ENCODE measurements at regions of chr1 and their contacts with region 1.

Region 1: DNA sequence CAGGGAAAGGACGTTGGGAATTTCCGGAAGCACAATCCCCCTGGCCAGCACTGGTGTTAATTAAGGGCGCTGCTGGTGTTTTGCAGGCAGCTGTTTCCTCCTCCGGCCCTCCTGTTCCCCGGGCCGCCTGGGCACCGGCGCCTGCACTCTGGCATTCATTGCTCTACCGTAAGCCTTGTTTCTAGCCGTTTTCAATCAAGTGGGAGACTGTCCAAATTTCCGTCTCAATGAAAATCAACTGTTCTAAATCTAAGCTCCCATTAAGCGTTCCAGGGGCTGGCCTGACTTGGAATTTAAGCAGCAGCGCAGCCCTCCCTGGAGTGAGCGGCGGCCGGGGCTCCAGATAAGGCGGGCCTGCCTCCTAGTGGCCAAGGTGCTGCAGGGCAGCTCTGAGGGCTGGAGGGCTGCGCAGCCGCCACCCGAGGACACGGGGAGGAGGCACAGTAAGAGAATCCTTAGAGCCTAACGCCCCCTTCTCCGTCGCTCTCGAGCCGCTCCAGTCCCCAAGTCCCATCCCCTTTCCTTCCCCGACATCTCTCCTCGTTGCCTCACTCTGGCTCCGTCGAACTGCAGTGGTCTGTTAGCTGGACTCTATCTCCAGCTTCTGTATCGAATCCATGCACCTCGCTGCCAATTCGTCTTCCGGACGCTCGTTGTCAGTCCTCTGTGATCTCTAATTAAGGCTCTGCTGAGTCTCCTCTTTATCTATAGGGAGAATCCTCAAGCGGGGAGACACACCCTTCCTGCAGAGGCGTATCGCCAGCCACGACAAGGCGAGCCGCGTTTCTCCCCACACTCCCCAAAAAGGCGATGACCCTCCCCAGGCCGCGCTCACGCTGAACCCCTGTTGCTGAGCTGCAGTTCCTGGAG is 57.8 kb upstream of the LRRC8D start:
- DNase-seq: peak; percentile 80 to 92 (median 85)
- ATAC-seq: peak; percentile 99
- H3K4me3 ChIP-seq: peak overlapping the region; percentile 61
- H3K4me3 Mint-ChIP-seq: peak overlapping the region; percentile 86
- H3K27ac ChIP-seq: peak overlapping the region in 1 of 2 donors; percentile 42
- H3K27ac Mint-ChIP-seq: peak overlapping the region; percentile 78
- H3K4me1 ChIP-seq: peaks cover 44% of the 10 kb centered on the region
- H3K4me1 Mint-ChIP-seq: peaks cover 51% of the 10 kb centered on the region
- H3K27me3 ChIP-seq: no peaks in the 10 kb centered on the region
- H3K27me3 Mint-ChIP-seq: no peaks in the 10 kb centered on the region
- CTCF ChIP-seq: peak; percentile 94

Region 2: DNA sequence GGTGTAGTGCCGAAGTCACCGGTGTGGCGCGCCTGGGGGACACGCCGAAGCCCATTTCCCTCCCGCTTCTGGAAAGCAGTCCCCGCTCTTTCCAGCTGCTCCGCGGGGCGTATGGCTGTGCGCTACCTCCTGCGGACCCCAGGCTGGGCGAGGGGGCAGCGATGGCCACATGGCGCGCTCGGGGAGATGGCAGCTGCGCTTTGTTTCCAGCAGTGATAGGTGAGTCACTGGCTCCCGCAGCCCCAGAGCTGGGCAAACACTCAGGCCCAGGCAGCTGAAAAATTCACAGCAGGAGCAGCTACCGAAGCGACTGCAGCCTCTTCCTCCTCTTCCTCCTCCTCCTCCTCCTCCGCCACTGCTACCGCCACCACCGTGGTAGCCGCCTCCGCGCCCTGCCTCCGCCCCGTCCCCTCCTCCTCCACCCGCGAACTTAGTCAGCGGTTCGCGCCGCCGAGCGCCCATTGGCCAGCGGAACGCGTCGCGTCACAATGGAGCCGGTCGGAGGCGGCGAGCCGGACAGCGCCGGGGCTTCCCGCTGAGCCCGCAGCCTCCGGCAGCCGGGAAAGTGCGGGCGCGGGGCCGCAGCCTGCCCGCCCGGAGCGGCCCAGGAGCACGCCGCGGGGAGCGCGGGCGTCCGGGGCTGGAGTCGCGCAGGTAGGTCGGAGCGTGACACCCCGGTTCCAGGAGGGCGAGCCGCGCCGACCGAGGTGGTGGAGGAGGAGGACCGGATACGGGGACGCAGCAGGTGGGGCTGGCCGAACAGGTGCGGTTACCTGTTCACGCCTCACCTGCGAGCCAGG is 238.4 kb before region 1 on chr1 and contains the start of gene LRRC8B:
- CTCF ChIA-PET with region 1: interaction called, 12 read pairs
- POLR2A ChIA-PET with region 1: interaction called, 5 read pairs
- intact Hi-C with region 1: loop called (anchors 1 to 5 kb)
- DNase-seq: peak; percentile 74 to 95 (median 86)
- ATAC-seq: peak; percentile 79
- H3K4me3 ChIP-seq: peak within 1 kb of the TSS; percentile 97
- H3K4me3 Mint-ChIP-seq: no peak within 1 kb of the TSS
- H3K27ac ChIP-seq: peak within 1 kb of the TSS; percentile 90 to 91
- H3K27ac Mint-ChIP-seq: no peak within 1 kb of the TSS
- H3K4me1 ChIP-seq: peaks cover 23% of the 10 kb centered on the region
- H3K4me1 Mint-ChIP-seq: peaks cover 18% of the 10 kb centered on the region
- H3K27me3 ChIP-seq: no peaks in the 10 kb centered on the region
- H3K27me3 Mint-ChIP-seq: no peaks in the 10 kb centered on the region
- CTCF ChIP-seq: no peak
- total RNA-seq, gene LRRC8B: 15.4 to 16.8 TPM

Region 3: DNA sequence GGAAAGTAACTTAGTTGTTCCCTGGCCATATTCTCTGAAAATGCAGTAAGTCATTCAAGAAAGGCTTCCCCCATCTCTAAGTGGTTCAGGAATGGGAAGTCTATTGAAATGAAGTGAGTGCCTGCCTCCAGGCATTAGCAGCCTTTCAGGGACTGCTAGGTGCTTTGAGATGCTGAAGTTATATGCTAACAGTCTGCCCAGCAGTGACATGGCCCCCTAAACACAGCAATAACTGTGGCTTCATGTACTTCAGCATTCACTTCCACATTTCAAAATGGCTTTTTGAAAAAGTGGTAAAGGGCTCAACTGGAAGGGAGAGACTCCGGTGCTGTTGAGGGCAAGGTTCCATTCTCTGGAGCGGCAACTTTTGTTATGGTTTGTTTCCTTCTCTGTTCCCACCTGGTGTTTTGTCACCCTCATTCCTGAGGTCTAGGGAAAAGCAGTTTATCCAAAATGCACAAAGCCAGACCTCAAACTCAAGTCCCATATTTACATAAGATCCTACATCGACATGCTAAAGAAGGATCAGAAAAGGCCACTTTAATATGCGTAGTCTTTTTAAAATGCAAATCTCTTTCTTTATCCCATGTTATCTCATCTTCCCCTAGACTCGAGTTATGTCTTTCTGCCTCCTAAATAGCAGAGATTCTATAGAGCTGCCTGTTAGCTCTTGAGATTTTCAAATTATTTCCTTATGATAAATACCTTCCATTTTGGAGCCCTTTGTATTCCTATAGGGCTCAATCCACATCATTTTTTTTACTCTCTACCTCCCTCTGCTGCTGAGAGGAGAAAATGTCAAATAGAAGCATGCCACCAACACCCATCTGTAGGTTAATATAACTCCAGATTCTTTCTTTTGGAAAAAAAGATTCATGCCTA is 164.3 kb before region 1 on chr1:
- CTCF ChIA-PET with region 1: interaction called, 35 read pairs
- POLR2A ChIA-PET with region 1: interaction called, 15 read pairs
- intact Hi-C with region 1: no loop called
- DNase-seq: peak in 3 of 14 experiments; percentile 51 to 68 (median 67)
- ATAC-seq: peak; percentile 70
- H3K4me3 ChIP-seq: no peak overlapping the region
- H3K4me3 Mint-ChIP-seq: peak overlapping the region; percentile 7
- H3K27ac ChIP-seq: no peak overlapping the region
- H3K27ac Mint-ChIP-seq: peak overlapping the region; percentile 21
- H3K4me1 ChIP-seq: peaks cover 27% of the 10 kb centered on the region
- H3K4me1 Mint-ChIP-seq: peaks cover 90% of the 10 kb centered on the region
- H3K27me3 ChIP-seq: no peaks in the 10 kb centered on the region
- H3K27me3 Mint-ChIP-seq: no peaks in the 10 kb centered on the region
- CTCF ChIP-seq: peak; percentile 75

Region 4: GRCh38 chr1:89615676-89616598 is 147.1 kb before region 1 on chr1:
- CTCF ChIA-PET with region 1: interaction called, 23 read pairs
- POLR2A ChIA-PET with region 1: interaction called, 88 read pairs
- intact Hi-C with region 1: no loop called
- DNase-seq: peak in 3 of 14 experiments; percentile 48 to 66 (median 56)
- ATAC-seq: no peak
- H3K4me3 ChIP-seq: no peak overlapping the region
- H3K4me3 Mint-ChIP-seq: no peak overlapping the region
- H3K27ac ChIP-seq: no peak overlapping the region
- H3K27ac Mint-ChIP-seq: peak overlapping the region; percentile 99
- H3K4me1 ChIP-seq: peaks cover 42% of the 10 kb centered on the region
- H3K4me1 Mint-ChIP-seq: peaks cover 90% of the 10 kb centered on the region
- H3K27me3 ChIP-seq: no peaks in the 10 kb centered on the region
- H3K27me3 Mint-ChIP-seq: no peaks in the 10 kb centered on the region
- CTCF ChIP-seq: peak; percentile 17

Region 5: DNA sequence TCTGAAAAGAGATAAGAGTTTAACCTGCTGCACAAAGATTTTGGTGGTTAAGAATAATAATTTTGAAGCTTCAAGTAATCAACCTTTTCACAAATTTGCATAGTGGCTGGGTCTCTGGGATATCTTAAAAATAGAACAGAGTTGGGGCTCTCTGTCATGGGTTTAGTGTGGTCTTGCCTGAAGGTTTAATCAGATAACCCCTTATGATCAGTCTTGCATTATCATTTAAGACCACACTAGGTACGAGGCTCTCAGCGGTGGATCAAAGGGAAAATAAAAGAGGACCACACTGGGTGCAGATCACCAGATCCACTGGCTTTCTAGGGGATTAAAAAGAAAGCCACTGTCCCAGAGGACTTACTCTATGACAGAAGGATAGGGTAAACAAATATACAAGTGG is 110.6 kb before region 1 on chr1:
- CTCF ChIA-PET with region 1: interaction called, 17 read pairs
- POLR2A ChIA-PET with region 1: interaction called, 17 read pairs
- intact Hi-C with region 1: no loop called
- DNase-seq: no peak
- ATAC-seq: no peak
- H3K4me3 ChIP-seq: no peak overlapping the region
- H3K4me3 Mint-ChIP-seq: peak overlapping the region; percentile 14
- H3K27ac ChIP-seq: peak overlapping the region in 1 of 2 donors; percentile 7
- H3K27ac Mint-ChIP-seq: peak overlapping the region; percentile 88
- H3K4me1 ChIP-seq: peaks cover 25% of the 10 kb centered on the region
- H3K4me1 Mint-ChIP-seq: peaks cover 90% of the 10 kb centered on the region
- H3K27me3 ChIP-seq: no peaks in the 10 kb centered on the region
- H3K27me3 Mint-ChIP-seq: no peaks in the 10 kb centered on the region
- CTCF ChIP-seq: no peak

Region 6: DNA sequence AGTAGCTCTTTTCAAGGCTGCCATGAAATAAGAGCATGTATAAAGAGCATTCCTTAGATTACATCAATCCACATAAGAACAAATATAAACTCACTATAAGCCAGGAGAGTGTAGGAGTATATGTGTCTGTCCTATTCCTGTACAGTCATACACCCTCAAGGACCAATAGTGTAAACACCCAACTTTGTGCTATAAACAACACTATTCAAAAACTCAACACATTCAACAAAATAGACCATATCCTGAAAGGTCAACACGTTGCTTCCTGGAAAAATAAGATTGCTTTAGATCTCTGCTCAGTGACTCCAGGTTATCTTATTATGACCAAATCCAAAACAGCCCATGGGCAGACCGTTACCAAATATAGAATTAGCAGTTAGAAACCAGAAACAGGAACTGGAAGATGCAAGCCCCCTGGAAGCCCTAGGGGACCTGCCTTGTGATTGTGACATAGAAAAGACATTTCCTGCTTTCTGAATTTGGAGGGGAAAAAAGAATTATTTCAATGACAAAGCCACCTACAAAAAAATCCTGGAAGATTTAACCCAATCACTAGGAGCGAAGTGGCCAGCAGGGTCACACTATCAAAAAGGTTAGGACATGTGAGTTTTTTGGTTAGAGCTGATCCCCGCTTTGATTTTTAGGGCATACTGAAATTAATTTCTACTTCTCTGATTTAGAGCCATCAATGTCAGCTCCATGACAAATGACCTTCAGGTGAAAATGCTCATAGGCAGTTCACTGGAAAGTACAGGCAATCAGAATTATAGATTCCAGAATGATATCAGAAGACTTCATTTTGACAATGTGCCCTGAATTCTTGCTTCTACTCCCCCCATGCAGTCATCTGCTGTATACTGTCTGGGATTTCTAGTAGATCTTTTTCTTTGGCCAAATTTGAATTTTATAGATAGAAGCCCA is 70.2 kb before region 1 on chr1:
- CTCF ChIA-PET with region 1: interaction called, 27 read pairs
- POLR2A ChIA-PET with region 1: interaction called, 6 read pairs
- intact Hi-C with region 1: loop called in 1 of 2 experiments (anchors 5 kb)
- DNase-seq: peak in 1 of 14 experiments; percentile 17
- ATAC-seq: no peak
- H3K4me3 ChIP-seq: no peak overlapping the region
- H3K4me3 Mint-ChIP-seq: peak overlapping the region; percentile 22
- H3K27ac ChIP-seq: peak overlapping the region; percentile 7 to 31
- H3K27ac Mint-ChIP-seq: peak overlapping the region; percentile 79
- H3K4me1 ChIP-seq: peaks cover 30% of the 10 kb centered on the region
- H3K4me1 Mint-ChIP-seq: peaks cover 86% of the 10 kb centered on the region
- H3K27me3 ChIP-seq: no peaks in the 10 kb centered on the region
- H3K27me3 Mint-ChIP-seq: no peaks in the 10 kb centered on the region
- CTCF ChIP-seq: no peak

Region 7: DNA sequence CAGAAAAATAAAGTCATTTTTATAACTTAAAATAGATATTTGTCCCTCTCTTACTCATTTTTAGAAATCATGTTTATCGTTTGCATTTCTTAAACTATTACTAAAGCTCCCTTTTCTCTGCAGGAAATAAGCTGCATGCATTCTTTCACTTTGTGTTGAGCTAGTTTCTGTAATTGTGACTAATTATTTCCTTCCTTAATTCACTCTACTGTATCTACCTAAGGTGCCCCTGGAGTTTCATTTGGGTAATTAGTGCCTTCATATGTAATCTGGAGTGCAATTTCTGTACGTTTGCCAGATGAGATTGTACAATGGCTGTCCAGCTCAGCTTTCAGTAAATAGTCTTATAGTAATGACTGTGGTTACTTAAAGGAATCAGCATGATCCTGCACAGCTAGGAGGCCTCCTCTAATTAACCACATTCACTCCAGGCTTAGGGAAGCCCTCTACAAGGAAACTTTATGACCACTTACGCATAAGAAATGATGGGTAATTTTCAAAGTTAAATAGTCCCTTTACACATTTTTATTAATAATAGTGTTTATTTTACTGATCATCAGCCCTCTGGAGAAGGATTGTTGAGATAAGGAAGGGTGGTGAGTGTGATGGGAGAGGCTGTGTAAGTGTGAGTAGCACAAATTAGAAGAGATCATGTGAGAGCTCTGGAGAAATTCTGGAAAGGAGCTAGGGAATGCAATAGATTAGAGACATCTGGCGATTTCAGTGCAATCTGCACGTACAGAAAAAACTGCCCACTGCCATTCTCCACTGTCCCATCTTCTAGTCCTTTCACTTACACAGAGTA is 43.3 kb before region 1 on chr1:
- CTCF ChIA-PET with region 1: interaction called, 18 read pairs
- POLR2A ChIA-PET with region 1: interaction called, 9 read pairs
- intact Hi-C with region 1: loop called (anchors 5 kb)
- DNase-seq: peak in 3 of 14 experiments; percentile 59 to 80 (median 60)
- ATAC-seq: peak; percentile 80
- H3K4me3 ChIP-seq: no peak overlapping the region
- H3K4me3 Mint-ChIP-seq: peak overlapping the region; percentile 64
- H3K27ac ChIP-seq: peak overlapping the region in 1 of 2 donors; percentile 25
- H3K27ac Mint-ChIP-seq: peak overlapping the region; percentile 72
- H3K4me1 ChIP-seq: peaks cover 19% of the 10 kb centered on the region
- H3K4me1 Mint-ChIP-seq: peaks cover 78% of the 10 kb centered on the region
- H3K27me3 ChIP-seq: no peaks in the 10 kb centered on the region
- H3K27me3 Mint-ChIP-seq: no peaks in the 10 kb centered on the region
- CTCF ChIP-seq: no peak

Region 8: DNA sequence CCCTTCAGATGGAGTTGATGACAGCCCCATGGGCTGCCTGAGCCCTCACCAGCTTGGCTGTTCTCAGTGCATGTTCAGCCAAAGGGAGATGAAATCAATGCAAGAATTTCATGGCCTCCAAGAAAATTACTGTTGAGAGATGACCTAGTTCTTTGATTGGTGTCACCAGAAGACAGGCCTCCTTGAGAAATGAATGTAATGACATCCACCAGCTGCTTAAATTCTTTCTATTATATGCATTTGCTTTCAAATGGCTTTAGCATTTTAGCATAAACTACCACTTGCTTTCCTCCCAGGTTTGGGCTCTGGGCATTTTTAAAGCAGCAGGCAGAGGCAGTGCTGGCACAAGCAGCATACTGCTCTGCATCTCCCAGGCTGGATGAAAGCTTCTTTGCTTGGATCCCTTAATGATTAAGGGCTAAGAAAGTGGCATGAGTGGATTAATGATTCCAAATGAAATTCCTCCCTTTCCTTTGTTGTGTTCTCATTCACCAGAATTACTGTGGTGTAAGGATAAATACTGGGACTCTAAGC is 510.3 kb after region 1 on chr1:
- CTCF ChIA-PET with region 1: no interaction called
- POLR2A ChIA-PET with region 1: no interaction called
- intact Hi-C with region 1: no loop called
- DNase-seq: no peak
- ATAC-seq: no peak
- H3K4me3 ChIP-seq: no peak overlapping the region
- H3K4me3 Mint-ChIP-seq: no peak overlapping the region
- H3K27ac ChIP-seq: no peak overlapping the region
- H3K27ac Mint-ChIP-seq: no peak overlapping the region
- H3K4me1 ChIP-seq: no peaks in the 10 kb centered on the region
- H3K4me1 Mint-ChIP-seq: no peaks in the 10 kb centered on the region
- H3K27me3 ChIP-seq: no peaks in the 10 kb centered on the region
- H3K27me3 Mint-ChIP-seq: no peaks in the 10 kb centered on the region
- CTCF ChIP-seq: no peak

Measured in CD4-positive, alpha-beta T cell (primary cell).